HEK293 (cell line): ENCODE measurements at regions of chr11 and their contacts with region 1.

Region 1: GRCh38 chr11:68798221-68798813 is 43.4 kb downstream of the CPT1A start:
- H3K4me3 ChIP-seq: no peak overlapping the region
- H3K27ac ChIP-seq: no peak overlapping the region
- H3K4me1 ChIP-seq: no peaks in the 10 kb centered on the region; the same call in 1 of the 2 replicates
- CTCF ChIP-seq: peak; percentile 27; the same call in 1 of the 2 replicates

Region 2: DNA sequence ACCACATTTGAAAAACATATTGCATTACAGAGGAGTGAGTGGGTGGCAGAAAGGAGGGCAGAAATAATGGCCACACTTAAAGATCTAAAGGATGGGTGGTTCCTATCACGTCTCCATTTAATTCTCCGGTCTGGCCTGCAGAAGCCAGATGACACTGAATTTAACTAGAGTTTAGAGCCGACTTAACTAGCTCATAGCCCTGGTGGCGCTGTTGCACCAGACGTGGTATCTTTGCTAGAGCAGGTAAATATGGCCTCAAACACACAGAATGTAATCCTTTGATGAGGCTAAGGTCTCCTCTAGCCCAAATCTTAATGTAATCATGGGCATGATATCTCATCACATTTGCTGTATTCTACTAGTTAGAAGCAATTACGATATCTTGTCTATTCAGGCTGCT is 165.5 kb before region 1 on chr11:
- CTCF ChIA-PET with region 1: interaction called, 16 read pairs
- POLR2A ChIA-PET with region 1: no interaction called
- H3K4me3 ChIP-seq: no peak overlapping the region
- H3K27ac ChIP-seq: no peak overlapping the region
- H3K4me1 ChIP-seq: no peaks in the 10 kb centered on the region
- CTCF ChIP-seq: no peak

Region 3: DNA sequence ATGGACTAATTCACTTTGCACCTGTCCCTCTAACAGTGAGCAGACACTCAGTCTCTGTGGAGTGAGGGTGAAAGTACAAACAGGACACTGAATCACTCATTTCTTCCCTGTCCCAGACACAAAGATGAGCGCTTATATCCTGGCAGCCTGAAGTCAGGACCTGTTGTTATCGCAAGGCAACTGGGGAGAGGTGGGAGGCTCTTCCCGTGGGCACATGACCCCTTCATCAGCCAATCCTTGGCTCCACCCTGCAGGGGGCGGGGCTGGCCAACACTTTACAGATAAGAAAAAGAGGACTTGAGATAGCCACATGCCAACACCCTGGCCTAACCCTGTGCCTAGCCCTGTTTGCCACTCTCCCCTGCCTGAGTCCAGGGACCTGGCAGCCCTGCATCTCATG is 17.5 kb before region 1 on chr11:
- CTCF ChIA-PET with region 1: interaction called, 17 read pairs
- POLR2A ChIA-PET with region 1: no interaction called
- H3K4me3 ChIP-seq: no peak overlapping the region
- H3K27ac ChIP-seq: no peak overlapping the region
- H3K4me1 ChIP-seq: no peaks in the 10 kb centered on the region
- CTCF ChIP-seq: no peak